Posterior cingulate gyrus (tissue), 11 donors: ENCODE measurements at regions of chr21 and their contacts with region 1.

Region 1: DNA sequence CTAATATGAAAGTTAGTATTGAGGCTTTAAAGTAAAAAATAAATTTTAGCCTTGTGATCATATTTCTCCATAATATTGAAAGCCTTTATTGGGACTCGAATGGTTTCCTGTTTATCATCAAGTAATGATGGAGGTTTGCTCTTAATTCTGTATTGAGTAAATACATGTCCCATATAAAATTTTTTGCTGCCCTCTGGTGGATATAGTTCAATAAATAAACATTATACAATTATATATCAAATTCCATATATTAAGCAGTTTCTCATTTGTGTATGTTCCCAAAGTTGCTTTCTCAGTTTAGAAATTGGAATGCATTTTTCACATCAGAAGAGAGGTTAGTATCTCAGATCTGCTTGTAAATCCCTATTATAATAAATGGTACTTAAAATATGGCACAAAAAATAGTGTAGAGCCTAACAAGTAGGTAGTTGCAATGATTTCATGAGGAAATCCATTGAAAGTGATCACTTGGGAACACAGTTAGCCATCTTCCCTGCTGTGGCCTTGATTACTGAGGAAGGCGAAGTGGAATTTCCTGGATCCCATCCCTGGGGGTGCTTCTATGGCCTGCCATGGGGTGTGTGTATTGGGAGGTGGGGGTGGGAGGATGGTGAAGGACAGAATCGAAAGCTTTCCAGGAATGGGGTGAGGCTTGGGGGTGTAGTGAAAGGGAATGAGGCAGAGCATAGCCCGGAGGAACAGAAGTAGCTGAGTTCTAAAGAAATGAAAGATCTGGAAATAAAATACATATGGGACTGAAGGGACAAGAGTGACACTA is 84.1 kb upstream of the C21orf91 start:
- DNase-seq: no peak

Region 2: DNA sequence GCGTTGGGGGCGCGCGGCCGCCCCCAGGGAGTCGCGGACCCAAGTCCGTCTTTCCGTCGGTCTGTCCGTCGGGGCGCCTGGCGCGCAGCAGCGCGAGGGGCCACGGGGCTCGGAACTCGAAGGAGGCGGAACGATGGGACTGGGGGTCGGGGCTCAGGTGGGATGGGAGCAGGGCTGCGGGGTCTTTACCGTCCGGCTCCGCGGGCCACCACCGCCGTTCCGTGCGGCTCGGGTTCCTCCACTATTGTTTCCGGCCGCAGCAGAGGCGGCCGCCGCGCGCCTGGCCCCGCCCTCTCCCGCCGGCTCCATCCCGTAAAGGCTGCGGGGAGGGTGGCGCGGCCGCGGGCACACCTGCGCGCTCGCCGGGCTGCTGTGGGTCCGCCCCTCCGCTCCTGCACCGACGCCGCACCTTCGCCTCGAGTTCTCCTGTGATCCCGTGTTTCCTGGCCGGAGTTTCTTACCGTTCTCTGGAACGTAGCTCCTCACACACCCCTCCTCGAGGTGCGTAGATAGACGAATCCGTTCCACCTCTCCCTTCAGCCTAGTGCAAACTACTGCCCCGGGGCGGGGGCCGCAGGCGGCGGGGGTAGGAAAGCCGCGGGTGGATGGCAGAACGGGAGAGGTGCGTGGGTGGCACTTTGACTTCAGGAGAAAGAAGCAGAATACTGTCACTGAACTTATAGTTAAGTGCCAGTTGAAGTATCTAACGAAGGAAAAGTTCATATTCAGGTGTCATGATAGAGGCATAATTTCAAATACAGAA is 83.9 kb before region 1 on chr21 and contains the start of gene C21orf91:
- intact Hi-C with region 1: loop called (anchors 5 kb)
- DNase-seq: peak; percentile 71 to 98 (median 86)

Region 3: DNA sequence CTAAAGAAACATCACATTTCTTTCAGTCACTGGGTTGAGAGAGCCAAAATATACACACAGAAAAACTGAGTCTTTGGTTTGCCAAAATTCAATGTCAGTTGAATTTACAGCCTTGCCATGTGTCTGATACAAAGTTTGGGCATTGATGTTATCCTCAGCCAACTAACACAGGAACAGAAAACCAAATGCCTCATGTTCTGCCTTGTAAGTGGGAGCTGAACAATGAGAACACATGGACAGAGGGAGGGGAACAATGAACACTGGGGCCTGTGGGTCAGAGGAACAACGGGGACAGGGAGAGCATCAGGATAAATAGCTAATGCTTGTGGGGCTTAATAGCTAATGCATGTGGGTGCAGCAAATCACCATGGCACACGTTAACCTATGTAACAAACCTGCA is 44.5 kb before region 1 on chr21:
- intact Hi-C with region 1: loop called (anchors 5 kb)
- DNase-seq: peak in 7 of 10 donors; percentile 23 to 89 (median 51)

Region 4: GRCh38 chr21:17949421-17949820 is 46.2 kb after region 1 on chr21:
- intact Hi-C with region 1: no loop called
- DNase-seq: no peak